ENCODE measurements at regions of chr1 and their contacts with region 1.

Region 1: DNA sequence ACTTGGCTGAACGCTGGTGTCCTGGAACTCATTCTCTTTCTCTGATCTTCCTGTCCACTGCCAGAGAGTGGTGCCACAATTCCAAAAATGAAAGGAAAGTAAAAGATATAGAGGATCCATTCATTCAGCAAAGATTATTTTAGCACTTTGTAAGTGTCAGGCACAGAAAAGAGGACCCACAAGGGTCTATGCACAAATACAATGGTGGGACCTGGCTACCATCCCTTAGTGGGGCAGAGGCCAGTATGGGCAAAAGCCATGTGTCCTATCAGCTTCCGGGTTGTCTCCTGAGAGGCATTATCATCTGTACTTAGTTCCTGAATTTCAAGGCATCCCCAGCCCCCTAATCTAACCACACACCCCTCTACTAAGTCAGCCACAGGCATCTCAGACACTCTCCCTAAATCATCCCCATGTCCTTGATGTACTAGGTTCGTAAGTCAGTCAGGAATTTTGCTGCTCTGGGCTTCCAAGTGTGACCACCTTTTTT is 19.0 kb downstream of the SSR2 start:
- DNase-seq: no peak
- H3K4me3 Mint-ChIP-seq: peak overlapping the region; percentile 74
- H3K27ac Mint-ChIP-seq: peak overlapping the region; percentile 94
- H3K4me1 Mint-ChIP-seq: peaks cover 38% of the 10 kb centered on the region
- H3K27me3 Mint-ChIP-seq: no peaks in the 10 kb centered on the region
- CTCF ChIP-seq: peak; percentile 14

Region 2: DNA sequence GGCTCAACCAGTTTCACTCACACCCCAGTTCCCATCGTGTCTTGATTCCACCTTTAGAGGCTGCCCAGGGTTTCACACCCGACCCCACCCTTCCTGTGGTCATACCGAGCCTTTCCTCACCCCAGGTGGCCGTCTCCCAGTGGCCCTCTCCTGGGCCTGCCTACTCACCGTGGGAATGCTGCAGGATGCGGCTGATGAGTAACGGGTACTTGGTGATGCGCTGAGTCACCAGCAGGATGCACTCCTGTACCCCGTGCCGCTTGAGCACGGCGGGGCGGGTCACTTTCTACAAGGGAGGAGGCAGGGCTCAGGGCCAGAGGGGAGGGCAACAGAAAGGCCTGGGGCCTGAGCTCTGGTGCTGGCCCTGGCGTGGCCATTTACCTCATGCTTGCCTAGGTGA is 39.8 kb before region 1 on chr1:
- CTCF ChIA-PET with region 1: interaction called, 10 read pairs
- POLR2A ChIA-PET with region 1: interaction called, 10 read pairs
- intact Hi-C with region 1: no loop called
- DNase-seq: peak; percentile 100
- H3K4me3 Mint-ChIP-seq: peak overlapping the region; percentile 75
- H3K27ac Mint-ChIP-seq: peak overlapping the region; percentile 98
- H3K4me1 Mint-ChIP-seq: peaks cover 40% of the 10 kb centered on the region
- H3K27me3 Mint-ChIP-seq: no peaks in the 10 kb centered on the region
- CTCF ChIP-seq: peak; percentile 42

Region 3: DNA sequence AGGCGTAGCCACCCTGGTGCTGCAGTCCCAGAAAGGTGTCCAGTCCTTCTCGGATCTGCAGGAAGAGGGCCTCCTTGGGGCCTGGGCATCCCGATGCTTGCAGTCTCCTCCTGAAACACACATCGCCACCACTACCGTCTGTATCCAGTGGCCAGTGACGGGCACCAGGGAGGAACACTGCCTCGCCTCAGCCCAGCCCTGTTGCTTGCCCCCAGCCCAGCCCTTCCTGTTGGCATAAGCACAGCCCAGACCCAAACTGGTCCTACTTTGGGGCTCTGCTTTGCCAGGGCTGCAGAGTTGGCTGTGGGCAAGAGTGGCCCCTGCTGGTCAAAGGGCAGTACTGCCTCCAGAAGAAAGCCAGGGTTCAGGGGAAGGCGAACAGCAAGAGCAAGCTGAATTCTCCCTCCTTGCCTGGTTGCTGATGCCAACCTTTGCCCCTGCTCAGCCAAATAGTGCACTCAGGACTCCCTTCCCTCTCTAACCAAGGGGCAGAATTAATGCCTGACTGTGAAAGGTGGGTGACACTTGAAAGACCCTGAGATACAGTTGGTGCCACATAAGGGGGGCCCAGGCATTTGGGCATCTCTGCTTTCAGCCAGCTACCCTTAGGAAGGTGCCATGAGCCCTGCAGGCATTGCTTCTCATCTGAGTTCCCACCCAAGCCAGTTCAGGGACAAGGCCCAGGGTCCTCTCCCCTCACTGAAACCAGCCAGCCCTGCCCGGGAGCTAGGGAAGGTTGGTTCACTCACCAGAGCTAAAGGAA is 12.3 kb before region 1 on chr1:
- CTCF ChIA-PET with region 1: interaction called, 71 read pairs
- POLR2A ChIA-PET with region 1: interaction called, 7 read pairs
- intact Hi-C with region 1: no loop called
- DNase-seq: peak; percentile 85
- H3K4me3 Mint-ChIP-seq: no peak overlapping the region
- H3K27ac Mint-ChIP-seq: no peak overlapping the region
- H3K4me1 Mint-ChIP-seq: peaks cover 14% of the 10 kb centered on the region
- H3K27me3 Mint-ChIP-seq: no peaks in the 10 kb centered on the region
- CTCF ChIP-seq: peak; percentile 99

Region 4: GRCh38 chr1:156020292-156021089 is 18.8 kb after region 1 on chr1 and contains the start of gene SSR2:
- CTCF ChIA-PET with region 1: interaction called, 5 read pairs
- POLR2A ChIA-PET with region 1: interaction called, 54 read pairs
- intact Hi-C with region 1: no loop called
- DNase-seq: peak; percentile 98
- H3K4me3 Mint-ChIP-seq: peak within 1 kb of the TSS; percentile 97
- H3K27ac Mint-ChIP-seq: peak within 1 kb of the TSS; percentile 86
- H3K4me1 Mint-ChIP-seq: peaks cover 22% of the 10 kb centered on the region
- H3K27me3 Mint-ChIP-seq: no peaks in the 10 kb centered on the region
- CTCF ChIP-seq: no peak
- total RNA-seq, gene SSR2: 477 and 589 TPM in 2 replicates

Region 5: GRCh38 chr1:156065212-156065611 is 63.5 kb after region 1 on chr1:
- CTCF ChIA-PET with region 1: interaction called, 12 read pairs
- POLR2A ChIA-PET with region 1: interaction called, 3 read pairs
- intact Hi-C with region 1: loop called (anchors 1 kb)
- DNase-seq: no peak
- H3K4me3 Mint-ChIP-seq: no peak overlapping the region
- H3K27ac Mint-ChIP-seq: no peak overlapping the region
- H3K4me1 Mint-ChIP-seq: peaks cover 19% of the 10 kb centered on the region
- H3K27me3 Mint-ChIP-seq: no peaks in the 10 kb centered on the region
- CTCF ChIP-seq: no peak

Region 6: DNA sequence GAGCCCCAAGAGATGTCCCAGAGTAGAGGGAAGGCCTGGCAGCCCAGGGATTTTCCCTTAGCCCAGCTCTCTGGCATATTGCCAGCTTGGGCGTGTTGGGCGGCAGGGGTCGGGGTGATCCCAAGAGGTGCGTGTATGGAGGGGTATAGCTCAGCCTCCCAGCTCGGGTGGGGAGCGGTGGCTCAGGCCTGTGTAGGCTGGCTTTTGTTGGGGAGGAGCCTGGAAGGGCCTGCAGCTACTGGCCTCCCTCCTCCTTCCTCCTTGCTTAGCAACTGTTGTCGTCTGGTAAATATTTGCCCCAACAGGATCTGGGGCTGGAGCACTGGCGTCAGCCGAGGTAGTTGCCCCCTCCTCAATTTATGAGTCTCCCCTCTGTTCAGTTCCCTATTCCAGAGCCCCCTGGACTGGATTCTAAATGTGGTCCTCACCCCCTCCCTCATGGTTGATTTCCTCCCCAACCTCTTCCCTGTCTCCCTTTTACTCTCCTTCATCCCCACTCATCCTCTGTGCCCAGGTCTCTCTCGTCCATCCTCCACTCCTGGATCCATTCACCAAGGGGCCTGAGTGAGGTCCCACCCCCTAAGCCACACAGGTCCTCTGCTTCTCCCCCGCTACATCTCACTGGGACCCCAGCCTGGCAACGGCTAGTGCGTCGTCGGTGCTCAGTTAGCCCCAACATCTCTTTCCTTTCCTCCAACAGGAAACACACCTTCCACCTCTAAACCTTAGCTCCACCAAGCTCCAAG is 102.5 kb after region 1 on chr1:
- CTCF ChIA-PET with region 1: no interaction called
- POLR2A ChIA-PET with region 1: no interaction called
- intact Hi-C with region 1: no loop called
- DNase-seq: peak; percentile 94
- H3K4me3 Mint-ChIP-seq: peak overlapping the region; percentile 9
- H3K27ac Mint-ChIP-seq: peak overlapping the region; percentile 91
- H3K4me1 Mint-ChIP-seq: peaks cover 73% of the 10 kb centered on the region
- H3K27me3 Mint-ChIP-seq: no peaks in the 10 kb centered on the region
- CTCF ChIP-seq: no peak

Measured in MCF 10A (cell line).